PC-3 (cell line): ENCODE measurements at regions of chr19 and their contacts with region 1.

Region 1: GRCh38 chr19:30649934-30650614 is 277.9 kb downstream of the ZNF536 start:
- DNase-seq: peak; percentile 54
- ATAC-seq: peak; percentile 35; the same call in 1 of the 2 replicates
- H3K4me3 ChIP-seq: no peak overlapping the region
- H3K27ac ChIP-seq: no peak overlapping the region
- H3K4me1 ChIP-seq: no peaks in the 10 kb centered on the region
- H3K27me3 ChIP-seq: peaks cover 27% of the 10 kb centered on the region
- CTCF ChIP-seq: peak; percentile 81

Region 2: DNA sequence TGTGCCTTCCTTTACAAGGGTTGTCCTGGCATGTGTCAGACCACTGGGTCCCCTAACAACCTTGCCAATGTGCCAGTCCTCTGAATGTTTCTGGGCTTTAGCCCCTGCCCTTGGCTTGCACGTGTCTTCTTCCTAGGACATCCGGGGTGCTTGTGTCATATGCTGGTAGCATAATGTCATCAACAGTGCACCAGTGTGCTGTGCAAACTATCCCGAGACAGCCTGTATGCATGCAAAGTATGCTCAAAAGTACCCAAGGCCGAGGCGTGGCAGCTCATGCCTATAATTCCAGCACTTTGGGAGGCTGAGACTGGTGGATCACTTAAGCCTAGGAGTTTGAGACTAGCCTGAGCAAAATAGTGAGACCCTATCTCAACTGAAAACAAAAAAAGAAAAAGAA is 914.3 kb before region 1 on chr19:
- CTCF ChIA-PET with region 1: no interaction called
- POLR2A ChIA-PET with region 1: no interaction called
- intact Hi-C with region 1: loop called (anchors 1 kb)
- DNase-seq: no peak
- ATAC-seq: no peak
- H3K4me3 ChIP-seq: no peak overlapping the region
- H3K27ac ChIP-seq: no peak overlapping the region
- H3K4me1 ChIP-seq: no peaks in the 10 kb centered on the region
- H3K27me3 ChIP-seq: peaks cover 44% of the 10 kb centered on the region
- CTCF ChIP-seq: no peak

Region 3: GRCh38 chr19:29878973-29879654 is 771.0 kb before region 1 on chr19:
- CTCF ChIA-PET with region 1: no interaction called
- POLR2A ChIA-PET with region 1: no interaction called
- intact Hi-C with region 1: loop called (anchors 5 kb)
- DNase-seq: peak; percentile 59
- ATAC-seq: peak; percentile 72
- H3K4me3 ChIP-seq: no peak overlapping the region
- H3K27ac ChIP-seq: no peak overlapping the region
- H3K4me1 ChIP-seq: no peaks in the 10 kb centered on the region
- H3K27me3 ChIP-seq: no peaks in the 10 kb centered on the region
- CTCF ChIP-seq: no peak

Region 4: DNA sequence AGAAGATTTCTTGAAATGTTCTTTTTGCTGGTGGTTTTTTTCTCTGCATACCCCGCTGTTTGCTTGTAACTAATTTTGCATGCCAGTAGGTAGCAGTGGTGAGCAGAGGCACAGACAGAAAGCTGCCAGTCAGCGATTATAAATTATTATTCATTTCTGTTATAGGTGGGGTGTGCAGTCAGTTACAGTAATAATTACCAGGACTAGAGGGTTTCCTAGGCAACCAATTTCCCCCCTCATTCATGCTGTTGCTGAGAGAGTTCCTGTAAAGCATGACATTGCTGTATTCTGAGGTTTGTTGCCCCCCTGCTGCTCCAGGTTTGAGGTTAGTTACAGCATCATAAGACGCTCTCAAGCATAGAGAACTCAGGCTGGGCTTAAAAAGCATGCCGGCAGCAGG is 603.6 kb before region 1 on chr19:
- CTCF ChIA-PET with region 1: no interaction called
- POLR2A ChIA-PET with region 1: no interaction called
- intact Hi-C with region 1: loop called (anchors 5 kb)
- DNase-seq: peak; percentile 36
- ATAC-seq: no peak; the same call in 1 of the 2 replicates
- H3K4me3 ChIP-seq: no peak overlapping the region
- H3K27ac ChIP-seq: no peak overlapping the region
- H3K4me1 ChIP-seq: no peaks in the 10 kb centered on the region
- H3K27me3 ChIP-seq: no peaks in the 10 kb centered on the region
- CTCF ChIP-seq: peak; percentile 63

Region 5: GRCh38 chr19:30682999-30683536 is 33.0 kb after region 1 on chr19:
- CTCF ChIA-PET with region 1: no interaction called
- POLR2A ChIA-PET with region 1: no interaction called
- intact Hi-C with region 1: no loop called
- DNase-seq: peak; percentile 70
- ATAC-seq: peak; percentile 62
- H3K4me3 ChIP-seq: no peak overlapping the region
- H3K27ac ChIP-seq: no peak overlapping the region
- H3K4me1 ChIP-seq: 0 out of 2 replicates have a peak, but pooled peaks cover 3% of the 10 kb centered on the region
- H3K27me3 ChIP-seq: 0 out of 2 replicates have a peak, but pooled peaks cover 1% of the 10 kb centered on the region
- CTCF ChIP-seq: peak; percentile 84

Region 6: GRCh38 chr19:30696514-30696913 is 46.4 kb after region 1 on chr19:
- CTCF ChIA-PET with region 1: no interaction called
- POLR2A ChIA-PET with region 1: no interaction called
- intact Hi-C with region 1: no loop called
- DNase-seq: no peak
- ATAC-seq: no peak
- H3K4me3 ChIP-seq: no peak overlapping the region
- H3K27ac ChIP-seq: no peak overlapping the region
- H3K4me1 ChIP-seq: no peaks in the 10 kb centered on the region
- H3K27me3 ChIP-seq: peaks cover 18% of the 10 kb centered on the region
- CTCF ChIP-seq: 0 out of 2 replicates have a peak, but pooled peaks have one; percentile 25